ENCODE measurements at regions of chr5 and their contacts with region 1.

Region 1: DNA sequence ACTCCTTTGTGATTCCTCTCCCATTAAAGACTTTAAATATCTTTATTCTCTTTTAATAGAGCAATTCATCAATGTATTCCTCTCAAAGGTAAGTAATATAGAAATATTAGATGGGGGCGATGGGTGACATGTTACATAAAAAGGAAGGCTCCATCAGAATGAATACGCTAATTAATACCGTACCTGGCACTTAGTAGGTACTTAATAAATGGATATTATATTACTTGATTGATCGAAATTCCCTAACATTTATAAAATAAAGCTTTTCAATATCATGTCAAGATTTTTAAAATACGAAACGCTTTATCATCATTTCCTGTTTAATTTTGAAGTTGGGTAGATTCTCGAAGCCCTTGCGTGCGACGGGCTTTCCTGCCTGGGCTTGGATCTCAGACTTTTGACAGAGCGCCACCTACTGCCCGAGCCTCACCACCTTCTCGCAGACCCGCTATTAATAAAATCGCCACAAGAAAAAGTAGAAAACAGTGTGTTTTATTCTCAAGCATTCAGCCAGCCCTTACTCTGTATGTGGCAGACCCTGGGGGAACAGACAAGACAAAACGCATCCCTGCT is 99.4 kb downstream of the C5orf15 start:
- DNase-seq: peak; percentile 92
- ATAC-seq: peak; percentile 75
- H3K4me3 Mint-ChIP-seq: no peak overlapping the region
- H3K27ac Mint-ChIP-seq: peak overlapping the region; percentile 68
- H3K4me1 Mint-ChIP-seq: peaks cover 29% of the 10 kb centered on the region
- H3K27me3 Mint-ChIP-seq: peaks cover 7% of the 10 kb centered on the region

Region 2: GRCh38 chr5:133321833-133322420 is 547.1 kb before region 1 on chr5:
- CTCF ChIA-PET with region 1: no interaction called
- POLR2A ChIA-PET with region 1: no interaction called
- intact Hi-C with region 1: loop called in 1 of 2 experiments (anchors 5 kb)
- DNase-seq: peak; percentile 77
- ATAC-seq: peak; percentile 86
- H3K4me3 Mint-ChIP-seq: no peak overlapping the region
- H3K27ac Mint-ChIP-seq: no peak overlapping the region
- H3K4me1 Mint-ChIP-seq: peaks cover 16% of the 10 kb centered on the region
- H3K27me3 Mint-ChIP-seq: no peaks in the 10 kb centered on the region

Region 3: GRCh38 chr5:133489632-133490031 is 379.4 kb before region 1 on chr5:
- CTCF ChIA-PET with region 1: interaction called, 3 read pairs
- POLR2A ChIA-PET with region 1: no interaction called
- intact Hi-C with region 1: loop called (anchors 1 to 5 kb)
- DNase-seq: peak; percentile 56
- ATAC-seq: peak; percentile 99
- H3K4me3 Mint-ChIP-seq: no peak overlapping the region
- H3K27ac Mint-ChIP-seq: peak overlapping the region; percentile 17
- H3K4me1 Mint-ChIP-seq: peaks cover 8% of the 10 kb centered on the region
- H3K27me3 Mint-ChIP-seq: peaks cover 3% of the 10 kb centered on the region

Region 4: DNA sequence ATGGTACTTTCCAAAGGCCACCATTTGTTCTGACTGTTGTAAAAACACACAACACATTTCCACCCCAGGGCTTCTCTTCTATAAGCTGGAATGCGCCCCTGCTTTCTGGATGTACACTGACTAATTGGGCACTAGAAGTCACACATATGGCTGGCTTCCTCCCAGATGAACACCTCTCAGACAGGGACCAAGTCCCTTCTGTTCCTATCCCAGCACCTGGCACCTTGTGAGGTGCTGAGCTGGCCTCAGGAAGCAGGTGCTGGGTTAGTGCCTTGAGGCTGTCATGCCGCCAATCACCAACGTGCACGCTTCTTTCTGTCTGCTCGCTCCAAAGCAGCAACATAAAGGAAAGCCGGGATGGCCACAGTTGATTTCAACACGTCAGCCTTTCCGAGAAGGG is 349.8 kb before region 1 on chr5:
- CTCF ChIA-PET with region 1: no interaction called
- POLR2A ChIA-PET with region 1: no interaction called
- intact Hi-C with region 1: no loop called
- DNase-seq: no peak
- ATAC-seq: no peak
- H3K4me3 Mint-ChIP-seq: no peak overlapping the region
- H3K27ac Mint-ChIP-seq: no peak overlapping the region
- H3K4me1 Mint-ChIP-seq: no peaks in the 10 kb centered on the region
- H3K27me3 Mint-ChIP-seq: peaks cover 11% of the 10 kb centered on the region

Region 5: DNA sequence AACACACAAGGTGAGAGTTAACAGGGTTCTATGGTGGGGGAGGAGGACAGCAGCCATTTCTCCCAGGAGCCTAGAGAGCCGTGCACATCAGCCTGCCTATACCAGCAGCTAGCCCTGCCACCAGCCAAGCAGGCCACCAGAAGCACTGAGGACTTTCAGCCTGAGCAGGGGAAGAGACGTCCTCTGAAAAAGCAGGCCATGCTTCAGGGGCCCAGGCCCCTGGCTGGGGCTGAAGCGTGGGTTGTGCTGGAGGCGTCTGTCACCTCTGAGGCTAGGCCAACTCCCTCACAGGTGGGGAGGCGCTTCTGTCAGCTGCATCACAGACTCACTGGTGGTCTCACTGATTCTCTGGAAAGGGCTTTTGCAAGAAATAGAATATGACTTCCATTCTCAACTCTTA is 273.0 kb before region 1 on chr5:
- CTCF ChIA-PET with region 1: no interaction called
- POLR2A ChIA-PET with region 1: no interaction called
- intact Hi-C with region 1: no loop called
- DNase-seq: no peak
- ATAC-seq: no peak
- H3K4me3 Mint-ChIP-seq: no peak overlapping the region
- H3K27ac Mint-ChIP-seq: no peak overlapping the region
- H3K4me1 Mint-ChIP-seq: no peaks in the 10 kb centered on the region
- H3K27me3 Mint-ChIP-seq: peaks cover 9% of the 10 kb centered on the region

Region 6: DNA sequence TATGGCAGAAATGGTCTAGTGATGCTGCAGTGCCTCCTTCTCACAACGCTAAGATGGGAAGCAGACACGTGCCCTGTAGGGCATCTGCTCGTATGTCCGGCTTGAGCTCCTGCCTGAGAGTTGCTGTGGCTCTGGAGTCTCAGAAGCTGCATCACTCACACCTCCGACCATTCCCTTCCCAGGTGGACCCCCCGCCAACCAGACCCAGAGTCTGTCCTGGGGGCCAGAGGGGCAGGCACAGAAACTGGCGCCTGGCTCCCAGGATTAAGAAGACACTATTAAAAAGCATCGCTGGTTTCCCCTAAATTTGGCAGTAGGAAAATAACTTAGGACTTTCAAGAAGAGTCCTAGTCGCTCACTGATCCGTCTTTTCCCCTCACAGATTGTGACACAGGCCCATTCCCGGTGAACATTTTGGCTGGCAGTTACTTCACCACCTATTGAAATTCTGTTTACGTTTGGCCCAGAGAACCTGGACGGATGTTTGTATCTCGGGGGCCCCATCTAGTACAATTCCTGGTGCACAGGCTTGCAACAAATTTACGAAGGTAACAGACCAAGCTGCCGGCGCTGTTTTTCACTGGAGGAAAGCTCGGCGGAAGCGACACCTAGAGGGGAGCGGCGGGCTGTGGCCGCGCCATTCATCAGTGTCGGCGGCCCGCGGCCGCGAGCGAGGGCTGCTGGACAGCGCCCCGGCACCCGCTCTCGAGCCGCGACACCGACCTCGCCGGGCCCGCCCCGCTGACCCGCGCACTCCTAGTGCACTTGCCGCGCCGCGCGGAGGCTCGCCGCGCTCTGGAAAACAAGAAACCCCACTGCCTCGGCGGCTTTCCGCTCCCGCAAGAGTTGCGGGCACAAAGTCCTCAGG is 258.3 kb before region 1 on chr5:
- CTCF ChIA-PET with region 1: no interaction called
- POLR2A ChIA-PET with region 1: no interaction called
- intact Hi-C with region 1: loop called in 1 of 2 experiments (anchors 2 kb)
- DNase-seq: peak; percentile 72
- ATAC-seq: peak; percentile 79
- H3K4me3 Mint-ChIP-seq: peak overlapping the region; percentile 49
- H3K27ac Mint-ChIP-seq: no peak overlapping the region
- H3K4me1 Mint-ChIP-seq: peaks cover 9% of the 10 kb centered on the region
- H3K27me3 Mint-ChIP-seq: peaks cover 58% of the 10 kb centered on the region

Region 7: DNA sequence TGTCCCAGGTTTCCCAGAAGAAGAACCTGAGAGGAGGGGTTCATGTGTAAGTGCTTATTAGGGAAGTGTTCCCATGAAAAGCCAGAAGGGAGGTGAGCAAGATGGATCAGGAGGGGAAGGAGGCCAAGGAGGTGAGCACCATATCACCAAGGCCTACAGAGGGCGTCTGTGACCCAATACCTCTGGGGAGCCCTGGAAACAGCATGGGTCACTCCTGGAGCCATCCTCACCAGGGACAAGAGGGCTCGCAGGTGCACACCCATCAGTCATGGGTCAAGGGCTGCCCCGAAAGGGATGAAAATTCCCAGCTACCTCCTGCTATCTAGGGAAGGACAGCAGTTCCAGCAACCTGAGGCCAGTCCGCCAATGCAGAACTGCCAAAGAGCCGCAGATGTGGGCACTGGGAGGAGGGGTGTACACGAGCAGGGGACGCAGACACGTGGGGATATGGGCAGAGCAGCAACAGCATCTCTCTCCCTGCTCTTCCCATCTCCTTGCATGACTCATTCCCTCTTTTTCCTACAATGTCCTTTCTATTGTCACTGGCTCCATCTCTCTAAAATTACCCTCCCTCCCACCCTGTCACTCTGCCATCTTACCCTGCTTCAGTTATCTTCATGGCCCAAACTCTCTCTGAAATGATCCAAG is 89.1 kb before region 1 on chr5:
- CTCF ChIA-PET with region 1: interaction called, 3 read pairs
- POLR2A ChIA-PET with region 1: no interaction called
- intact Hi-C with region 1: loop called in 1 of 2 experiments (anchors 5 kb)
- DNase-seq: no peak
- ATAC-seq: no peak
- H3K4me3 Mint-ChIP-seq: no peak overlapping the region
- H3K27ac Mint-ChIP-seq: no peak overlapping the region
- H3K4me1 Mint-ChIP-seq: no peaks in the 10 kb centered on the region
- H3K27me3 Mint-ChIP-seq: no peaks in the 10 kb centered on the region

Region 8: GRCh38 chr5:133801431-133801830 is 67.6 kb before region 1 on chr5:
- CTCF ChIA-PET with region 1: no interaction called
- POLR2A ChIA-PET with region 1: no interaction called
- intact Hi-C with region 1: no loop called
- DNase-seq: no peak
- ATAC-seq: no peak
- H3K4me3 Mint-ChIP-seq: no peak overlapping the region
- H3K27ac Mint-ChIP-seq: no peak overlapping the region
- H3K4me1 Mint-ChIP-seq: no peaks in the 10 kb centered on the region
- H3K27me3 Mint-ChIP-seq: peaks cover 18% of the 10 kb centered on the region

Region 9: GRCh38 chr5:133944263-133945185 is 75.5 kb after region 1 on chr5:
- CTCF ChIA-PET with region 1: interaction called, 7 read pairs
- POLR2A ChIA-PET with region 1: no interaction called
- intact Hi-C with region 1: loop called in 1 of 2 experiments (anchors 1 kb)
- DNase-seq: peak; percentile 78
- ATAC-seq: peak; percentile 81
- H3K4me3 Mint-ChIP-seq: no peak overlapping the region
- H3K27ac Mint-ChIP-seq: no peak overlapping the region
- H3K4me1 Mint-ChIP-seq: peaks cover 3% of the 10 kb centered on the region
- H3K27me3 Mint-ChIP-seq: no peaks in the 10 kb centered on the region

Measured in activated CD4-positive, alpha-beta T cell treated with anti-CD3 and anti-CD28 coated beads for 36 hours (primary cell).